ENCODE measurements at regions of chr17 and their contacts with region 1.

Region 1: GRCh38 chr17:39730095-39730921 is at the start of gene MIEN1:
- DNase-seq: no peak
- H3K4me3 Mint-ChIP-seq: peak within 1 kb of the TSS; percentile 79
- H3K27ac Mint-ChIP-seq: peak within 1 kb of the TSS; percentile 90
- H3K4me1 Mint-ChIP-seq: peaks cover 34% of the 10 kb centered on the region
- H3K27me3 Mint-ChIP-seq: no peaks in the 10 kb centered on the region
- CTCF ChIP-seq: no peak
- total RNA-seq, gene MIEN1: 2,121 and 2,217 TPM in 2 replicates

Region 2: GRCh38 chr17:39270923-39271322 is 459.4 kb before region 1 on chr17:
- CTCF ChIA-PET with region 1: no interaction called
- intact Hi-C with region 1: no loop called
- DNase-seq: peak; percentile 72
- H3K4me3 Mint-ChIP-seq: no peak overlapping the region
- H3K27ac Mint-ChIP-seq: peak overlapping the region; percentile 26
- H3K4me1 Mint-ChIP-seq: no peaks in the 10 kb centered on the region
- H3K27me3 Mint-ChIP-seq: no peaks in the 10 kb centered on the region
- CTCF ChIP-seq: peak; percentile 58

Region 3: GRCh38 chr17:39636927-39637736 is 93.2 kb before region 1 on chr17 and contains the start of gene STARD3:
- CTCF ChIA-PET with region 1: interaction called, 42,089 read pairs
- intact Hi-C with region 1: loop called (anchors 1 kb)
- DNase-seq: no peak
- H3K4me3 Mint-ChIP-seq: peak within 1 kb of the TSS; percentile 71
- H3K27ac Mint-ChIP-seq: peak within 1 kb of the TSS; percentile 28
- H3K4me1 Mint-ChIP-seq: peaks cover 61% of the 10 kb centered on the region
- H3K27me3 Mint-ChIP-seq: peaks cover 5% of the 10 kb centered on the region
- CTCF ChIP-seq: no peak
- total RNA-seq, gene STARD3: 2,579 and 2,697 TPM in 2 replicates

Region 4: GRCh38 chr17:39787743-39788484 is 57.6 kb after region 1 on chr17:
- CTCF ChIA-PET with region 1: interaction called, 34,714 read pairs
- intact Hi-C with region 1: no loop called
- DNase-seq: peak; percentile 80
- H3K4me3 Mint-ChIP-seq: no peak overlapping the region
- H3K27ac Mint-ChIP-seq: no peak overlapping the region
- H3K4me1 Mint-ChIP-seq: peaks cover 29% of the 10 kb centered on the region
- H3K27me3 Mint-ChIP-seq: no peaks in the 10 kb centered on the region
- CTCF ChIP-seq: no peak

Region 5: DNA sequence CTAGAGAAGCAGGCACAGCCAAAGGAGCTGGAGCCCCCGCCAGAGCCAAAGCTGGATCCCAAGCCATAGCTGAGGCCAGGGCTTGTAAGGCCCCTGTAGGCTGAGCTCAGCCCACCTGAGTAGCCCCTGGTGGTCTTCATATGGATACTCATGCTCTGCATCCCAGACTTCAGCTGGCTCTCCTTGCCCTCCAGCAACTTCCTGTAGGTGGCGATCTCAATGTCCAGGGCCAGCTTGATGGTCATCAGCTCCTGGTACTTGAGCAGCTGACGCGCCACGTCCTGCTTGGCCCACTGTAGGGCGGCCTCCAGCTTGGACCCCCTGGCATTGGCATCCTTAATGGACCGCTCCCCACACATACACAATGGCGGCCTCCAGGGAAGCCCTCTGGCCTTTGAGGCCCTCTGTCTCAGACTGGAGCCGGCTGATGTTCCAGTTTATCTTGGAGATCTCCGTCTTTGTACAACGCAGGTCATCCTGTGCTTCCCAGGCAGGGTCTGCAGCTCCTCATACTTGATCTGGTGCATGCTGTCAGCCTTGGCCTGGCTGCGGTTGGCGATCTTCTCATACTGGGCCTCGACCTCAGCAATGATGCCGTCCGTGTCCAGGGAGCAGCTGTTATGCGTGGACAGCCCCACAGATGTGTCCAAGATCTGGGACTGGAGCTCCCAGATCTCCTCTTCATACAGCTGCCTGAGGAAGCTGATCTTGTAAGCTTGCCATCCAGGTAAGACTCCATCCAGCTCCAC is 104.9 kb after region 1 on chr17:
- CTCF ChIA-PET with region 1: interaction called, 1,211 read pairs
- intact Hi-C with region 1: no loop called
- DNase-seq: peak; percentile 79
- H3K4me3 Mint-ChIP-seq: no peak overlapping the region
- H3K27ac Mint-ChIP-seq: no peak overlapping the region
- H3K4me1 Mint-ChIP-seq: no peaks in the 10 kb centered on the region
- H3K27me3 Mint-ChIP-seq: no peaks in the 10 kb centered on the region
- CTCF ChIP-seq: no peak

Region 6: GRCh38 chr17:39908789-39909352 is 178.6 kb after region 1 on chr17:
- CTCF ChIA-PET with region 1: interaction called, 679 read pairs
- intact Hi-C with region 1: no loop called
- DNase-seq: peak; percentile 67
- H3K4me3 Mint-ChIP-seq: no peak overlapping the region
- H3K27ac Mint-ChIP-seq: no peak overlapping the region
- H3K4me1 Mint-ChIP-seq: no peaks in the 10 kb centered on the region
- H3K27me3 Mint-ChIP-seq: no peaks in the 10 kb centered on the region
- CTCF ChIP-seq: no peak

Region 7: DNA sequence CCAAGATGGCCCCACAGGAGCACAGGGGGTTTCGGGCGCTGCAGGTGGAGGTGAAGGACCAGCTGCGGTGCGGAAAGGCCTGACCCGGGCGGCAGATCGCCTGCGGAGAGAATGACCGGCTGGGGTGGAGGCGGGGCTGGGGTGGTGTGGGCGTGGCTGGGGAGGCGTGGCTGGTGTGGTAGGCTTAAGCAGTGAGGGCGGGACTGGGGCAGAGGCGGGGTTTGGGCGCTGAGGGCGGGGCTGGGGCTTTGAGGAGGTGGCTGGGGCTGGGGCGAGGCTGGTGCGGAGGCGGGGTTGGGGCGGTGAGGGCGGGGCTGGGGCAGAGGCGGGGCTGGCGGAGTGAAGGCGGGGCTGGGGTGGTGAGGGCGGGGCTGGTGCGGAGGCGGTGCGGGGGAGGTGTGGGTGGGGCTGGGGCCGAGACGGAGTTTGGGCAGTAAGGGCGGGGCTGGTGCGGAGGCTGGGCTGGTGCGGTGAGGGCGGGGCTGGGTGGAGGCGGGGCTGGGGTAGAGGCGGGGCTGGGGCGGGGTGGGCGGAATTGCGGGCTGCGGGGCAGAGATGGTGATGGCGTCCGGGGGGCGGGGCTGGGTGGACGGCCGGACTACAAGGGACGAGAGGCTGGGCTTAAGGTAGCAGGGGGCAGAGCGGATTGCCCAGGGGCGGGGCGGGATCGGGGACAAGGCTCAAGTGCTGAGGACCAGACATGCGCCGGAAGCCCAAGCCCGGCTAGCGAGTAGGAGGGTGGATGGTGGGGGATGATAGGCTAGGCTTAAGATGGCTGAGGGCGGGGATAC is 222.6 kb after region 1 on chr17:
- CTCF ChIA-PET with region 1: interaction called, 1,335 read pairs
- intact Hi-C with region 1: loop called (anchors 1 kb)
- DNase-seq: peak; percentile 100
- H3K4me3 Mint-ChIP-seq: peak overlapping the region; percentile 58
- H3K27ac Mint-ChIP-seq: peak overlapping the region; percentile 18
- H3K4me1 Mint-ChIP-seq: peaks cover 42% of the 10 kb centered on the region
- H3K27me3 Mint-ChIP-seq: peaks cover 15% of the 10 kb centered on the region
- CTCF ChIP-seq: no peak

Region 8: DNA sequence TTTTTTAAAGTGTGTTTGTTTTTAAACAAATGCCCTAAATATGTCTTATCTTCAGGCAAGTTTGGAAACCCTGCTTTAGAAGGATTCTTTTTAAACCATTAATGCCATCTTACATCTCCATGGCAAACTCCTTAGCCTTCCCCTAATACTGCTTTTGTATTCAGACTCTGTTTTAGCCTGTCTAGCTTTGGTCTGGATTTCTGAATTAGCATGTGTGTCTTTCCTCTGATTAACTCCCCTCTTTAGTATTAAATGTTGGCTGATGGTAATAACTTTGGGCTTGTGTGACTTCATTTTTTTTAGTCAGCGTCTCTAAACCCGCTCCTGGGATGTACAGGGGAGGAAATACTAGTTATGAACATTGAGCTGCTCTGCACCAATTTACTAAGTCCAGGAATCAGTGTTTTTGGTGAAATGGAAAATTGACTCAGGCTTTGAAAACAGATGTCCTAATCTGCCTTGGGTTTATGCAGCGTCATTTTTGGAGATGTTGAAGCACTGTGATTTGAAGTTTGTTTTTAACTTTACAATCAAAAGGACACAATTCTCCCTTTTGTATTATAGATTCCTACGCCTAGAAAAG is 511.0 kb after region 1 on chr17:
- CTCF ChIA-PET with region 1: no interaction called
- intact Hi-C with region 1: no loop called
- DNase-seq: no peak
- H3K4me3 Mint-ChIP-seq: no peak overlapping the region
- H3K27ac Mint-ChIP-seq: no peak overlapping the region
- H3K4me1 Mint-ChIP-seq: peaks cover 32% of the 10 kb centered on the region
- H3K27me3 Mint-ChIP-seq: no peaks in the 10 kb centered on the region
- CTCF ChIP-seq: no peak

Region 9: DNA sequence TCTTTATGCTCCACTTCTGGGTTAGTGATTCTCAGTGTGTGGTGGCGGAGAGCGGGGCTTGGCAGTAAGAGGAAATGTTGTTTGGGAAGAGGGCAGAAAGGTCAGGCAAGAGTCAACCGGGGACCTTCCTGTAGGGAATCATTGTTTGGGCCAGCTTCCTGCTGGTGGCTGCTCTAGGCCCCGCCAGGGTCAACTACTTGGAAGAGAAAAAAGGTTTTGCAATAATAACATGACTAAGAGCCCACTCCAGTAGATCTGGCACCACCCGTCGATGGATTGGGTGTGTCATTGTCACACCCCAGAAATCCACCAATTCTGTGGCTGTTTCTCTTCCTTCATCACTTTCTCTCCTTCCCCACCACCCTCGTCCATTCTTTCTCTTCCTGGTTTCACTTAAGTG is 977.4 kb after region 1 on chr17:
- CTCF ChIA-PET with region 1: interaction called, 12 read pairs
- intact Hi-C with region 1: no loop called
- DNase-seq: peak; percentile 92
- H3K4me3 Mint-ChIP-seq: no peak overlapping the region
- H3K27ac Mint-ChIP-seq: peak overlapping the region; percentile 14
- H3K4me1 Mint-ChIP-seq: peaks cover 36% of the 10 kb centered on the region
- H3K27me3 Mint-ChIP-seq: peaks cover 14% of the 10 kb centered on the region
- CTCF ChIP-seq: no peak